OCI-LY7 (cell line): ENCODE measurements at regions of chr12 and their contacts with region 1.

Region 1: DNA sequence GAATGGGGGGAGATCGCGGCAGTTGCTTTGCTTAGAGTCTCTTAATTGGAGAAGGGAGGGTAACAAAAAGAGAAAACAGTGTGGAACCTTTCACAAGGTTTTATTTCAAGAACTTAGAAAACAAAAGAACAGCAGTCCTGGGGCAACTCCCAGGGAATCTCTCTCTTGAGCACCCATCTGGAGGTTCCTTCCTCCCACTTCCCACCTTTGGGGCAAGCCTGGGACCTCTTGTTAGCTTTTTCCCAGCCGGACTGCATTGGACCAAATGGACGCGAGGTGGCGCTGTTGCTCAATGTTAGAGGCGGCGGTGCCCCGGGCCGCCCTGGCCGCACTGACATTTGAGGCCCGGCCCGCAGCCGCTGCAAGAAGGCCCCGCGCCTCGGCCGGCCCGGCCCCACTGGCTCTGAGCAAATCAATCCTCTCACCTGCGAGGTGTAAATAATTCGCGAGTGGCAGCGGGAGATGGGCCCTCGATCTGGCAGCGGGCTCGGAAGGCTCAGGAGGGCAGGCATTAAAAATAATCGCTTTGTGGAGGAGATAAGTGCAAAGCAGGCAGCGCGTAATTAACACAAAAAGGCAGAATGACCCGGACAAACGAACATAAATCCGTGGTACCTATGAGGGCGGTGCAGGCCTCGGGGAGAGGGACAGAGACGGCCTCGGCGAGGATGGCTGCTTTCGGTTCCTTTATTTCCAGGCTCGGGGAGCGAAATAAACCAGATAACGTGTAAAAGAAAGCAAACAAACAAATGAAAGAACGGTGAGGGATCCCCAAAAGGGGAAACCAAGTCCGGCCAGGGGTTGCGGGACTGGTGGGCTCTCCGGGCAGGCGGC is 2.7 kb upstream of the HOXC8 start:
- DNase-seq: peak; percentile 87
- H3K4me3 ChIP-seq: peak overlapping the region; percentile 44
- H3K27ac ChIP-seq: no peak overlapping the region
- H3K4me1 ChIP-seq: peaks cover 29% of the 10 kb centered on the region
- CTCF ChIP-seq: peak; percentile 99

Region 2: DNA sequence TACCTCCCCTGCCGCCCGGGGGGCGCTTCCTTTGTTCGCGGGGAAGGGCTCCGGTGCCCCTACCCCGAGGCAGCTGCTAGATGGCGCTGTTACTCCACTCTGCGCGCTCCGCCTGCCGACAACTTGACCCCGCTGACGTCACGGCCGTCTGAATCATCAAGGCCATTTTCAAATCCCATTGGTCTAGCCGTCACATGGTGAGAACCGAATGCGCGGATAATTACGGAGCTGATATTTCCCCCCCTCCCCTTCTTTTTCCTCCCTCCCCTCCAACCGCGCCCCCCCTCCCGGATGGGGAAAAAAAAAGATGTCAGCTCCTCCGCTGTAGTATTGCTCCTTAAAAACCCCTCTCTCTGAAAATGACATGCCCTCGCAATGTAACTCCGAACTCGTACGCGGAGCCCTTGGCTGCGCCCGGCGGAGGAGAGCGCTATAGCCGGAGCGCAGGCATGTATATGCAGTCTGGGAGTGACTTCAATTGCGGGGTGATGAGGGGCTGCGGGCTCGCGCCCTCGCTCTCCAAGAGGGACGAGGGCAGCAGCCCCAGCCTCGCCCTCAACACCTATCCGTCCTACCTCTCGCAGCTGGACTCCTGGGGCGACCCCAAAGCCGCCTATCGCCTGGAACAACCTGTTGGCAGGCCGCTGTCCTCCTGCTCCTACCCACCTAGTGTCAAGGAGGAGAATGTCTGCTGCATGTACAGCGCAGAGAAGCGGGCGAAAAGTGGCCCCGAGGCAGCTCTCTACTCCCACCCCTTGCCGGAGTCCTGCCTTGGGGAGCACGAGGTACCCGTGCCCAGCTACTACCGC is 21.0 kb before region 1 on chr12 and contains the start of gene HOXC10:
- CTCF ChIA-PET with region 1: no interaction called
- POLR2A ChIA-PET with region 1: no interaction called
- intact Hi-C with region 1: no loop called
- DNase-seq: peak; percentile 95
- H3K4me3 ChIP-seq: peak within 1 kb of the TSS; percentile 30
- H3K27ac ChIP-seq: no peak within 1 kb of the TSS
- H3K4me1 ChIP-seq: peaks cover 49% of the 10 kb centered on the region
- CTCF ChIP-seq: peak; percentile 76
- total RNA-seq, gene HOXC10: 0.28 TPM in 1 of 2 replicates, not detected in the other

Region 3: GRCh38 chr12:54032627-54033100 is 26.6 kb after region 1 on chr12 and contains the start of gene HOXC5:
- CTCF ChIA-PET with region 1: interaction called, 3 read pairs
- POLR2A ChIA-PET with region 1: no interaction called
- intact Hi-C with region 1: loop called (anchors 1 kb)
- DNase-seq: peak; percentile 75
- H3K4me3 ChIP-seq: peak within 1 kb of the TSS; percentile 47
- H3K27ac ChIP-seq: no peak within 1 kb of the TSS
- H3K4me1 ChIP-seq: peaks cover 46% of the 10 kb centered on the region
- CTCF ChIP-seq: peak; percentile 99
- total RNA-seq, gene HOXC5: not detected in 2 replicates

Region 4: GRCh38 chr12:54134850-54135249 is 128.8 kb after region 1 on chr12:
- CTCF ChIA-PET with region 1: no interaction called
- POLR2A ChIA-PET with region 1: no interaction called
- intact Hi-C with region 1: loop called (anchors 1 kb)
- DNase-seq: peak; percentile 27
- H3K4me3 ChIP-seq: no peak overlapping the region
- H3K27ac ChIP-seq: no peak overlapping the region
- H3K4me1 ChIP-seq: no peaks in the 10 kb centered on the region
- CTCF ChIP-seq: peak; percentile 58

Region 5: DNA sequence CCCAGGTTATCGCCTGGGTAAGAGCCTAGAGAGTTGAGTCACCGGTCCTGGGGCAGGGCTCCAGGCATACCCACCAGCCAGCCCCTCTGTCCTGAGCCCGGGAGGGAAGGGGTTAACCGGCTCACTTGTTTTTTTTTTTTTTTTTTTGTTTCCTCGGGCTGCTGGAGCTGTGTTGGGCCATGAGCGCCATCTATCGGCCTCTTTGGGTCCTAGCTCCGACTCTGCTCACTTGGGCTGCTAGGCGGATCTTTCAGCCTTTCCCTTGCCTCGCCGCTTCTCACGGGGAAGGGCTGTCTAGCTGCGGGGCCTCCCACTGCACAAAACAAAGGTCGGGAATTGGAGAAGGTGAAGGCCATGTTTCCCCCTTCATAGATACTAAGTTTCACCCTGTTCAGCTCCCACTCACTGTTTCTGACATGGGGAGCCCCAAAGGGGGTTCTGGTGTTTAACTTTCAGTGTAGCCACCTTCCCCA is 185.5 kb after region 1 on chr12:
- CTCF ChIA-PET with region 1: interaction called, 4 read pairs
- POLR2A ChIA-PET with region 1: no interaction called
- intact Hi-C with region 1: loop called (anchors 1 kb)
- DNase-seq: peak; percentile 89
- H3K4me3 ChIP-seq: no peak overlapping the region
- H3K27ac ChIP-seq: no peak overlapping the region
- H3K4me1 ChIP-seq: peaks cover 54% of the 10 kb centered on the region
- CTCF ChIP-seq: peak; percentile 82

Region 6: DNA sequence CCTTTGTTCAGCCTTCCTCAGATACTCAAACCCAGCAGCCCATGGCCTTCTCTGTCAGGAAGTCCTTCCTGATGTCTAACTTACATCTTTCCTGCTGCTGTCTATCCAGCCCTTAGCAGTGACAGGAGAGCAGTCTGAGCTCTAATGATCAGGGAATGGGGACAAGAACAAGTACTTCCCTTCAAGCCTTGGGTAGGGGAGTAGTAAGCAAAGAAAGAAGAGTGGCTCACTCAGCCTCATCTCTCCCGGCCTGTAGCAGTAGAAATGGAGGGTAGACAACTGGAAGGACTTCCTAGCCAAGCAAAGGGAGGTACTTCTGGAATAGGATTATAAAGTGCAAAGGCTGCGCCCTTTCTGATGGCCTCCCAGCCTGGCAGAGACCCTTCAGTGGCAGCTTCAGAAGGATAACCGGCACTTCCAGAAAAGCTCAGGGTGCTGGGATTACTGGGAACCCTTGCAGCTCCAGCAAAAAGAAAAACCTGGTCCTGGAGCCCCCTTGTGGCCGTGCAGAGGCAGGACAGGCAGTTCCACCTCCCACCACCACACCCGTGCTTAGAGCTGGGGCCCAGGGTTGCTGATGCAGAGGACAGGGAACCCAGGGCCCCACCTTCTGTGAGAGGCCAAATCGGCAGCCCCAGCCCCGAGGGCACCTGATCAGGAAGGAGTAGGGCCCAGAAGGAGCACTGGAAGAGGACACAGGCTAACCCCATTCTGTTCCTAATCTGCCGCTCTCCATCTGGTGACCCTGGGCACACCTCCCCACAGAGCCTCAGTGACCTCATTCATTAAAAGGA is 195.1 kb after region 1 on chr12:
- CTCF ChIA-PET with region 1: no interaction called
- POLR2A ChIA-PET with region 1: no interaction called
- intact Hi-C with region 1: loop called (anchors 1 kb)
- DNase-seq: peak; percentile 77
- H3K4me3 ChIP-seq: no peak overlapping the region
- H3K27ac ChIP-seq: no peak overlapping the region
- H3K4me1 ChIP-seq: peaks cover 19% of the 10 kb centered on the region
- CTCF ChIP-seq: peak; percentile 99

Region 7: GRCh38 chr12:54207484-54208294 is 201.6 kb after region 1 on chr12:
- CTCF ChIA-PET with region 1: interaction called, 3 read pairs
- POLR2A ChIA-PET with region 1: no interaction called
- intact Hi-C with region 1: loop called (anchors 1 kb)
- DNase-seq: peak; percentile 84
- H3K4me3 ChIP-seq: no peak overlapping the region
- H3K27ac ChIP-seq: no peak overlapping the region
- H3K4me1 ChIP-seq: peaks cover 14% of the 10 kb centered on the region
- CTCF ChIP-seq: peak; percentile 96

Region 8: GRCh38 chr12:54214553-54215406 is 208.7 kb after region 1 on chr12:
- CTCF ChIA-PET with region 1: no interaction called
- POLR2A ChIA-PET with region 1: interaction called, 4 read pairs
- intact Hi-C with region 1: loop called (anchors 2 kb)
- DNase-seq: peak; percentile 97
- H3K4me3 ChIP-seq: peak overlapping the region; percentile 55
- H3K27ac ChIP-seq: peak overlapping the region; percentile 89
- H3K4me1 ChIP-seq: peaks cover 63% of the 10 kb centered on the region
- CTCF ChIP-seq: peak; percentile 100